Transverse colon (tissue), 4 donors: ENCODE measurements at regions of chr17 and their contacts with region 1.

Region 1: DNA sequence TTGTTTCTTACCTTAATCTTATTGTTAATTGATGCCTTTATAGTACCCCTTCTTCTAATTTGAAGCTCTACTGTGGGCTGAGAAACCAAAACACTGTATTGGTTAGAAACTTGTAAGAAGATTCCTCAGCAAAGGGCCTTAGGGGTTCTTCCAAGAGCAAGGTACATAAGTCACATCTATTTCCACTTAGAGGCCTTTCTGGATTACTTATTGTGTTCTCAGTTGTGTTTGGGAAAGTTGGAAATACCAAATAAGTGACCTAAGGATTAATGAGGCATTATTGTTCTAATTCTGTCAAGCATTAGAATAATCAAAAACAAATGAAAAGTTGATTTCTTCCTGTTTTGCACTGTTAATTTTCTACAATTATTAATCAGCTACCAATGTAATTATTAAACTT is 85.8 kb downstream of the SKAP1 start:
- DNase-seq: no peak
- H3K4me3 ChIP-seq: no peak overlapping the region
- H3K27ac ChIP-seq: no peak overlapping the region
- H3K4me1 ChIP-seq: peaks cover 0 to 14% (median 0%) of the 10 kb centered on the region in 4 donors
- H3K27me3 ChIP-seq: peaks cover 32% of the 10 kb centered on the region
- CTCF ChIP-seq: no peak
- EP300 ChIP-seq: no peak
- POLR2A ChIP-seq: no peak

Region 2: DNA sequence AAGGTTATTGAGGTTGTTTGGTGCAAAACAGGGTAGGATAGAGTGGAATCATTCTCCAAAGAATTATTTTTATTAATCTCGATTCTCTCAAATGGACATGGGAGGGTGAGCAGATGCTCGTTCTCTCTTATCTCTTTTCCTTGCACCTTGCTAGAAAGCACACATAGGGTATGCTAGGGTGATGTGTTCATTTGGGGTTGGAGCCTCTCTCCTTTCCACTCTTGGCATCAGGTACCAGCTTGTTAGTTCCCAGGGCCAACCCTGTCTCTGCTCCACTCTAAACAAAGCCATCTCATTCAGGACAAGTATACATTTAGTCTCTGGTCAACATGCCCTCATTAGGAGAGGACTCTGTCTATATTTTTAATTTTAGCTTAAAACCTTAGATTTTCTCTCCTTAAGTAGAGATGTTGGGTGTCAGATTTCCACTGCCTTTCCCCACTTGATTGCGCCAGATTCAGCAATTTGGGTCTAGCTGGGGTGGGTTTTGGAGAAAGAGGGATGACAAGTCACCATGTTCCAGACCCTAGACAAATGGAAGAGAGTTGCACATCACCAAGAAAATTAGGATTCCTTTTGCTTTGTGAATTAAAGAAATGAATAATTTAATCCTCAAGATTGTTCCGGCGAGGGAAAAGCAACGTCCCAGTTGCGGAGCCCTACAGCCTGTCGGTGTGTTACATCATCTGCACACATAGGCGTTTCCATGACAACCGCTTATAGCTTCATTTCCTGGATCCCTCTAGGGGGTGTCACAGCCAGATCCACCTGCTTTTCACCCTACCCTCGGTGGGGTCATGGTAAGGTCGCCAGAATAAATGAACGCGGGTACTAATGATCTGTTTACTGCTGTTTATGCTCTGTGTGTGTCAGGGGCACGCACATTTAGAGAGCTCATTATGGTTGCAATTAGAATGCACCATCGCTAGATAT is 195.1 kb before region 1 on chr17:
- in situ Hi-C with region 1: no loop called
- intact Hi-C with region 1: no loop called
- DNase-seq: no peak
- H3K4me3 ChIP-seq: no peak overlapping the region
- H3K27ac ChIP-seq: no peak overlapping the region
- H3K4me1 ChIP-seq: peaks cover 0 to 9% (median under 1%) of the 10 kb centered on the region in 4 donors
- H3K27me3 ChIP-seq: peaks cover 62% of the 10 kb centered on the region
- CTCF ChIP-seq: no peak
- EP300 ChIP-seq: no peak
- POLR2A ChIP-seq: no peak

Region 3: GRCh38 chr17:48259694-48260291 is 84.5 kb before region 1 on chr17:
- in situ Hi-C with region 1: no loop called
- intact Hi-C with region 1: no loop called
- DNase-seq: no peak
- H3K4me3 ChIP-seq: no peak overlapping the region
- H3K27ac ChIP-seq: no peak overlapping the region
- H3K4me1 ChIP-seq: peaks cover 0 to 30% (median 6%) of the 10 kb centered on the region in 4 donors
- H3K27me3 ChIP-seq: peaks cover 5% of the 10 kb centered on the region
- CTCF ChIP-seq: peak; percentile 37 to 71 (median 54)
- EP300 ChIP-seq: no peak
- POLR2A ChIP-seq: no peak

Region 4: GRCh38 chr17:48457080-48457836 is 113.0 kb after region 1 on chr17:
- in situ Hi-C with region 1: loop called in 2 of 4 experiments (anchors 10 kb)
- intact Hi-C with region 1: no loop called
- DNase-seq: peak; percentile 61
- H3K4me3 ChIP-seq: peak overlapping the region in 1 of 4 donors; percentile 14
- H3K27ac ChIP-seq: no peak overlapping the region
- H3K4me1 ChIP-seq: peaks cover 0 to 13% (median 6%) of the 10 kb centered on the region in 4 donors
- H3K27me3 ChIP-seq: peaks cover 12% of the 10 kb centered on the region
- CTCF ChIP-seq: peak; percentile 84 to 99 (median 96)
- EP300 ChIP-seq: no peak
- POLR2A ChIP-seq: no peak

Region 5: GRCh38 chr17:48483471-48484131 is 139.4 kb after region 1 on chr17:
- in situ Hi-C with region 1: no loop called
- intact Hi-C with region 1: loop called (anchors 10 kb)
- DNase-seq: peak; percentile 38
- H3K4me3 ChIP-seq: no peak overlapping the region
- H3K27ac ChIP-seq: peak overlapping the region in 3 of 4 donors; percentile 15 to 37 (median 21)
- H3K4me1 ChIP-seq: peaks cover 0 to 7% (median 5%) of the 10 kb centered on the region in 4 donors
- H3K27me3 ChIP-seq: no peaks in the 10 kb centered on the region
- CTCF ChIP-seq: no peak
- EP300 ChIP-seq: no peak
- POLR2A ChIP-seq: no peak

Region 6: DNA sequence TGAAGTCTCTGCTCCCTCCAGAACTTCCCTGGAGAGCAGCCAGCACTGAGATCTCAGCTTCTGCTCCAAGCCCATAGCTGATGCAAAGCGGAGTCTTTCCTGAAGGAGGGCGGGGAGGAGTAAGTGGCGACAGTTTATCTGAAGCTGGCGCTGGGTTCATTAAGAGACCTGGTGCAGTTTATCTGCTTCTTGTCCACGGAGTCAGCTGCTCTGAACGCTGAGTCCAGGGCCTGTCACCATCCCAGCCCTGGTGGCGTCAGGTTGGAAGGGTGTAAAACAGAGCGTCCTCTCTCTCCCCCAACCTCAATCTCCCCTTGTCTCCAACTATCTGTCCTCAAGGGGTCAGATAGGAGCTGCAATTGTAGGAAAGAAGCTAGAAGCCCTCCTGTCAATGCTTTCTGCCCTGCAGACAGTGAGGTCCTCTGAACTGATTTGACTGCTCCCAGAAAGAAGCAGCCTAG is 156.8 kb after region 1 on chr17:
- in situ Hi-C with region 1: no loop called
- intact Hi-C with region 1: no loop called
- DNase-seq: peak; percentile 35
- H3K4me3 ChIP-seq: no peak overlapping the region
- H3K27ac ChIP-seq: peak overlapping the region; percentile 8 to 54 (median 42)
- H3K4me1 ChIP-seq: peaks cover 0 to 20% (median 8%) of the 10 kb centered on the region in 4 donors
- H3K27me3 ChIP-seq: no peaks in the 10 kb centered on the region
- CTCF ChIP-seq: peak in 3 of 5 experiments; percentile 13 to 36 (median 15)
- EP300 ChIP-seq: no peak
- POLR2A ChIP-seq: no peak

Region 7: DNA sequence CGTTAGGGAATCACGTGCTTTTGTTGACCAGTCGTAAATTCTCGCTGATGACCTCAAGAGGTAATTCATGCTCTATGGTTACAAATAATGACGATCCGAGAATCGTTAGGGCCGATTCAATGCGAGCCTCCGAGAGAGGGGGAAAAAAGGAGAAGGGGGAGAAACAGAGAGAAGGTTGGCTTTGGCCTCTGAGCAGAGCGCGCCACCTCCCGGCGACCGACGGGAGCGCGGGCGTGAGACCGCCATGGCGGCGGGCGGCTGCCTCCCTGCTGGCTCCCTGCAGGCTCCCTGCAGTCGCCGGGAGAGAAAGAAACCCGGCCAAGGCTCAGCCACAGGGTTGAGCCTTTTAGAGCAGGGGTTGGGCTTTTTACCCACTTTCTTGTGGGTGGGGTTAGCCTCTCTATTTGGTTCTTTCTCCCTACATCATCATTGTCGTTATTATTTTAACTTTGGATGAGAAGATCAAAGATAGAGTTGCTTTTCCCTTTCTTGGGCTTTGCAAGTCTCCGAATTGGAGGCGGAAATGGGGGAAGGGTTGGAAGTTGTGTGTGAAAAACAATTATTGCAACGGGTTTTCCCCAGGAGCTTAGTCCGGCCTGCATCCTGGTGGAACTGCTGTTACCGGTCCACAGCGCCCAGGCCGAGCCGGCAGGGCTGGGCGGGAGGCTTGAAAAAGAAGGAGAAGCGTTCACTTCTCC is 249.7 kb after region 1 on chr17:
- in situ Hi-C with region 1: loop called in 2 of 4 experiments (anchors 10 kb)
- intact Hi-C with region 1: no loop called
- DNase-seq: peak; percentile 79
- H3K4me3 ChIP-seq: peak overlapping the region in 3 of 4 donors; percentile 31 to 64 (median 43)
- H3K27ac ChIP-seq: peak overlapping the region; percentile 89 to 95 (median 92)
- H3K4me1 ChIP-seq: peaks cover 8 to 80% (median 40%) of the 10 kb centered on the region in 4 donors
- H3K27me3 ChIP-seq: peaks cover 5% of the 10 kb centered on the region
- CTCF ChIP-seq: peak; percentile 76 to 85 (median 79)
- EP300 ChIP-seq: no peak
- POLR2A ChIP-seq: no peak